B cell (primary cell): ENCODE measurements at regions of chr6 and their contacts with region 1.

Region 1: GRCh38 chr6:159693128-159693893 is at the start of gene SOD2:
- DNase-seq: peak; percentile 94
- ATAC-seq: peak; percentile 76
- H3K4me3 ChIP-seq: peak within 1 kb of the TSS; percentile 62 to 89 (median 79)
- H3K4me3 Mint-ChIP-seq: peak within 1 kb of the TSS; percentile 93
- H3K27ac ChIP-seq: peak within 1 kb of the TSS; percentile 71 to 89
- H3K27ac Mint-ChIP-seq: peak within 1 kb of the TSS; percentile 96
- H3K4me1 ChIP-seq: peaks cover 28 to 34% of the 10 kb centered on the region in 2 donors
- H3K4me1 Mint-ChIP-seq: peaks cover 30% of the 10 kb centered on the region
- H3K27me3 ChIP-seq: no peaks in the 10 kb centered on the region
- H3K27me3 Mint-ChIP-seq: no peaks in the 10 kb centered on the region
- CTCF ChIP-seq: no peak
- total RNA-seq, gene SOD2: 94.7 and 97.6 TPM in 2 replicates

Region 2: DNA sequence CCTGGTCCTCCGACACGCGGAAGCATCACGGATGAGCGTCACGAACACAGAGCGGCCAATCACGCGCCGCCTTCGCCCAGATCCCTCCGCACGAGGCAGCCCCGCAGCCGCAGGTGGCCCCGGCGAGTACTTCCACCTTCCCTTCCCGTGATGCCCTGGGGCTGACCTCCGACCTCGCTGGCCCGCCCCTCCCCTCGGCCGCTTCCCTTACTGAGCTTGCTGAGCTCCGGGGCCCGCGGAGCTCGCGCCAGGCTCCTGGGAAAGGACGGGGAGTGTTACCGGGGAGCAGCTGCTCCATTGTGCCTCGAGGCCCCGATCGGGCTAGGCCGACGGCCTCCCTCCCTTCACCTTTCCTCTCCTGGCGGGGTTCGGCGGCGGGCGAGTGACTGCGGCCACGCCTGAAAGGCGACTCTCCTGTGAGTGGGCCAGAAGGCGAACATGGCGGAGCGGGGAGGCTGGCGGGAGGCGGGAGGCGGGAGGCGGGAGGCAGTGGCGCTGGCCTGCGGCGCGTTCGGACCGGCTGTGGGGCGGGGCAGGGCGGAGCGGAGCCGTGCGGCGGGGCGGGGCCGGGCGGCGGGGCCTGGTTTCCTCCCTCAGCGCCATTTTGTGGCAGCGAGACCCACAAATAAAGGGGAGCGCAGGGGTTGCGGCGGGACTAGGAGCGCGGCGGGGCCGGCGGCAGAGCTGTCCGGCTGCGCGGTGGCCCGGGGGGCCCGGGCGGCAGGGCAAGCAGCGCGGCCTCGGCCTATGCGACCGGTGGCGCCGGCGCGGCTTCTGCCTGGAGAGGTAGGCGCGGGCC is 33.8 kb after region 1 on chr6 and contains the start of gene WTAP:
- CTCF ChIA-PET with region 1: interaction called, 32 read pairs
- POLR2A ChIA-PET with region 1: interaction called, 58 read pairs
- intact Hi-C with region 1: loop called (anchors 1 kb)
- DNase-seq: peak; percentile 99
- ATAC-seq: peak; percentile 84
- H3K4me3 ChIP-seq: peak within 1 kb of the TSS; percentile 79 to 91 (median 86)
- H3K4me3 Mint-ChIP-seq: peak within 1 kb of the TSS; percentile 95
- H3K27ac ChIP-seq: peak within 1 kb of the TSS; percentile 97 to 98
- H3K27ac Mint-ChIP-seq: peak within 1 kb of the TSS; percentile 99
- H3K4me1 ChIP-seq: peaks cover 42 to 46% of the 10 kb centered on the region in 2 donors
- H3K4me1 Mint-ChIP-seq: peaks cover 44% of the 10 kb centered on the region
- H3K27me3 ChIP-seq: no peaks in the 10 kb centered on the region
- H3K27me3 Mint-ChIP-seq: no peaks in the 10 kb centered on the region
- CTCF ChIP-seq: no peak
- total RNA-seq, gene WTAP: 165 TPM in 2 replicates

Region 3: DNA sequence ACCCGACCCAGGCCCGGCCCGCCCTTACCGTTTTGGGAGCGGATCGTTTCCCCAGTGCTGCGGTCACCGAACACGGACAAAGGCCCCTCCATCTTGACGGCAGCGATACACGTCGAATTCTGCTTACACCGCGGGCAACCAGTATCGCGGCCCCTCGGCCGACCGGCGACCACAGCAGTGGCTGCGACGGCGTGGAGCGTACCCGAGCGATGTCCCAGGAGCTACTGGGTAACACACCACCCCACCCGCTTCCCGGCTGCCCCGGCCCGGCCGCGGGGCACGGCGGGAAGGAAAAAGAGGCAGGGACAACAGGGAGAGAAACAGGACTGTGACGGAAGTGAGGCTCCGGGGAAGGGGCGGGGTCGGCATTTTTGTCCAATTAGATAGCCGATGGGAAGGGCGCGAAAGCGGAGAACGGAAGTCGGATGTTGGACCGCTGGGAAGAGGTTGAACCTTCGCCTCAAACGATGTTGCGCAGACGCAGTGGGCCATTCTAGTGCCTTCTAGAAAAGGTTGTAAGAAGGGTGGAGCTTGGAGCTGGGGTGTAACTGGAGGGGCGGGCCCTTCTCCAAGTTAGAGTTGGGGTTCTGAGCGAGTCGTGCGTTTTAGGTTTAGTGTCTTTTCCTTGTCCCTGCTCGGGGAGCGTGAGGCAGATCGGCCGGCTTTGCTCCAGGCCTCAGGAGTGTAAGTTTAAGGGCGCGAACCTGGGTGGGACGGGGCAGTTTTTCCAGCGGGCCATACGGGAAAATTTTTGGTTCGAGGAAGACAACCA is 96.3 kb after region 1 on chr6 and contains the start of gene TCP1:
- CTCF ChIA-PET with region 1: interaction called, 13 read pairs
- POLR2A ChIA-PET with region 1: interaction called, 13 read pairs
- intact Hi-C with region 1: loop called (anchors 1 kb)
- DNase-seq: peak; percentile 99
- ATAC-seq: peak; percentile 78
- H3K4me3 ChIP-seq: peak within 1 kb of the TSS; percentile 70 to 98 (median 93)
- H3K4me3 Mint-ChIP-seq: peak within 1 kb of the TSS; percentile 100
- H3K27ac ChIP-seq: peak within 1 kb of the TSS; percentile 70 to 96
- H3K27ac Mint-ChIP-seq: peak within 1 kb of the TSS; percentile 95
- H3K4me1 ChIP-seq: peaks cover 30 to 32% of the 10 kb centered on the region in 2 donors
- H3K4me1 Mint-ChIP-seq: peaks cover 51% of the 10 kb centered on the region
- H3K27me3 ChIP-seq: no peaks in the 10 kb centered on the region
- H3K27me3 Mint-ChIP-seq: no peaks in the 10 kb centered on the region
- CTCF ChIP-seq: no peak
- total RNA-seq, gene TCP1: 137 and 150 TPM in 2 replicates

Region 4: DNA sequence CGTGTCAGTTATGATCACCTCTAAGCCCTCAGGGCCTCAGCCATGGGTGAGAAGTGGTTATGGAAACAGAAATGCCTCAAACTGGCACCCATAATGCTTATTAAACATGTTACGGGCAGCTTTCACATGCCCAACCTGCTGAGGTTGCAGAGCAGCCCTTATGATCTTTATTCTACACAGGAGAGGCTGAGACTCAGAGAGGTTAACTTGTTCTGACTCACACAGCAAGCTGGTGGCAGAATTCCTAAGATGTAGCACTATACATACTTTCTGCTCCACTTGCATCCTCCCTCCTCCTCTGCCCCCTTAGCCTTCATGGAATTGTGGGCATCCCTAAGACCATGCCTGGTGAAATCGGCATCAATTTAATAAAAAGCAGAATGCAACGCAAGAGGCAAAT is 240.9 kb after region 1 on chr6:
- CTCF ChIA-PET with region 1: no interaction called
- POLR2A ChIA-PET with region 1: no interaction called
- intact Hi-C with region 1: no loop called
- DNase-seq: no peak
- ATAC-seq: no peak
- H3K4me3 ChIP-seq: no peak overlapping the region
- H3K4me3 Mint-ChIP-seq: no peak overlapping the region
- H3K27ac ChIP-seq: no peak overlapping the region
- H3K27ac Mint-ChIP-seq: no peak overlapping the region
- H3K4me1 ChIP-seq: peaks cover 0 to 4% of the 10 kb centered on the region in 2 donors
- H3K4me1 Mint-ChIP-seq: peaks cover 11% of the 10 kb centered on the region
- H3K27me3 ChIP-seq: peaks cover 0 to 7% (median 1%) of the 10 kb centered on the region in 4 experiments
- H3K27me3 Mint-ChIP-seq: peaks cover 24% of the 10 kb centered on the region
- CTCF ChIP-seq: no peak

Region 5: DNA sequence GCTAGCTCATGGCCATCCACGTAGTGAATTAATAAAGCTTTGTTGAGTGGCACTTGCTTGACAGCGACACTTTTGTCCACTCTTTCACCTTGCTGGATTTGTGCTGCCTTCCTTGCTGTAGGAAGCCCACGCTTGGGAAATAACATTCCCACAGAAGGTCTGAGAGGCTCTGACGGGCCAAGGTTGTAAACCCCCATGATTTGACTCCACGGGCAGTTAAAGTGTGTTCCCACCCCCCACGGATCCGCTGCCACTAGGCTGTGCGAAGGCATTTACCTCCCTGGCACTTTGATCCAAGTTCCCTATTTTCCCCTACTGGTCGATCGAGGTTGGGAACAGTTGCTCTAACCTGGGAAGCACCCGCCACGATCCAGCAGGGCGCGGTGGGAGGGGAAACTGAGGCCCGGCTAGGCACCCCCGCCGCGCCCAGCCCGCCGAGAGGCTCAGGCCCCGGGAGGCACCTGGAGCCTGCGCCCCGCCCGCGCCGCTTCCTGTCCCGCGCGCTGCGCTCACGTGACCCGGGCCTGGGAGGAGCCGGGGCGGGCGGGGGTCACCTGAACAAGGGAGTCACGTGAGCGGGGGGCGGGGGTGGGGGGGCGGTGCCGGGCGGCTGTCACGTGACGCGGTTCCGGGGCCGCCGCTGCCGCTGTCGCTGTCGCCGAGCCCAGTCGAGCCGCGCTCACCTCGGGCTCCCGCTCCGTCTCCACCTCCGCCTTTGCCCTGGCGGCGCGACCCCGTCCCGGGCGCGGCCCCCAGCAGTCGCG is 275.3 kb after region 1 on chr6 and contains the start of gene IGF2R:
- CTCF ChIA-PET with region 1: no interaction called
- POLR2A ChIA-PET with region 1: no interaction called
- intact Hi-C with region 1: loop called (anchors 2 kb)
- DNase-seq: peak; percentile 94
- ATAC-seq: peak; percentile 87
- H3K4me3 ChIP-seq: peak within 1 kb of the TSS; percentile 54 to 85 (median 63)
- H3K4me3 Mint-ChIP-seq: peak within 1 kb of the TSS; percentile 92
- H3K27ac ChIP-seq: peak within 1 kb of the TSS; percentile 73 to 75
- H3K27ac Mint-ChIP-seq: peak within 1 kb of the TSS; percentile 92
- H3K4me1 ChIP-seq: peaks cover 12 to 25% of the 10 kb centered on the region in 2 donors
- H3K4me1 Mint-ChIP-seq: peaks cover 36% of the 10 kb centered on the region
- H3K27me3 ChIP-seq: no peaks in the 10 kb centered on the region
- H3K27me3 Mint-ChIP-seq: no peaks in the 10 kb centered on the region
- CTCF ChIP-seq: no peak
- total RNA-seq, gene IGF2R: 53.3 and 58.0 TPM in 2 replicates

Region 6: DNA sequence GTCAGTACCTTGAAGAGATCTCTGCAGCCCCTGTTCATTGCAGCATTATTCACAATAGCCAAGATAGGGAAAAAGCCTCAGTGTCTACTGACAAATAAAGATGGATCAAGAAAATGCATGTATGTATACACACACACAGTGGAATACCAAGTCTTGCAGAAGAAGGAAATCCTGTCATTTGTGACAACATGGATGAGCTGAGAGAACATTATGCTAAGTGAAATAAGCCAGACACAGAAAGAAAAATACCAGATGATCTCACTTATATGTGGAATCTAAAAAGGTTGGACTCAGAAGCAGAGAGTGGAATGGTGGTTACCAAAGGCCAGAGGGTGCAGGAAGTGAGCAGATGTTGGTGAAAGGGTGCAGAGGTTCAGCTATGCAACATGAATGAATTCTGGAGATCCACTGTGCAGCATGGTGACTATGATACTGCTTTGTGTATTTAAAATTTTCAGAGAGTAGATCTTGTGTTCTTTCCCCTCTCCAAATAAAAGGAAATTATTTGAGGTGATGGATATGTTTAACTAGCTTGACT is 417.3 kb after region 1 on chr6:
- CTCF ChIA-PET with region 1: no interaction called
- POLR2A ChIA-PET with region 1: no interaction called
- intact Hi-C with region 1: no loop called
- DNase-seq: no peak
- ATAC-seq: no peak
- H3K4me3 ChIP-seq: no peak overlapping the region
- H3K4me3 Mint-ChIP-seq: no peak overlapping the region
- H3K27ac ChIP-seq: no peak overlapping the region
- H3K27ac Mint-ChIP-seq: no peak overlapping the region
- H3K4me1 ChIP-seq: no peaks in the 10 kb centered on the region
- H3K4me1 Mint-ChIP-seq: no peaks in the 10 kb centered on the region
- H3K27me3 ChIP-seq: no peaks in the 10 kb centered on the region
- H3K27me3 Mint-ChIP-seq: no peaks in the 10 kb centered on the region
- CTCF ChIP-seq: no peak

Region 7: GRCh38 chr6:160992061-160992979 is 1299.0 kb after region 1 on chr6:
- CTCF ChIA-PET with region 1: no interaction called
- POLR2A ChIA-PET with region 1: no interaction called
- intact Hi-C with region 1: loop called (anchors 10 kb)
- DNase-seq: peak; percentile 43
- ATAC-seq: peak; percentile 61
- H3K4me3 ChIP-seq: peak overlapping the region; percentile 75 to 92 (median 82)
- H3K4me3 Mint-ChIP-seq: peak overlapping the region; percentile 99
- H3K27ac ChIP-seq: peak overlapping the region; percentile 65 to 81
- H3K27ac Mint-ChIP-seq: peak overlapping the region; percentile 95
- H3K4me1 ChIP-seq: peaks cover 6 to 14% of the 10 kb centered on the region in 2 donors
- H3K4me1 Mint-ChIP-seq: peaks cover 44% of the 10 kb centered on the region
- H3K27me3 ChIP-seq: no peaks in the 10 kb centered on the region
- H3K27me3 Mint-ChIP-seq: peaks cover 7% of the 10 kb centered on the region
- CTCF ChIP-seq: peak; percentile 29